Common myeloid progenitor, CD34-positive (primary cell): ENCODE measurements at regions of chr9 and their contacts with region 1.

Region 1: DNA sequence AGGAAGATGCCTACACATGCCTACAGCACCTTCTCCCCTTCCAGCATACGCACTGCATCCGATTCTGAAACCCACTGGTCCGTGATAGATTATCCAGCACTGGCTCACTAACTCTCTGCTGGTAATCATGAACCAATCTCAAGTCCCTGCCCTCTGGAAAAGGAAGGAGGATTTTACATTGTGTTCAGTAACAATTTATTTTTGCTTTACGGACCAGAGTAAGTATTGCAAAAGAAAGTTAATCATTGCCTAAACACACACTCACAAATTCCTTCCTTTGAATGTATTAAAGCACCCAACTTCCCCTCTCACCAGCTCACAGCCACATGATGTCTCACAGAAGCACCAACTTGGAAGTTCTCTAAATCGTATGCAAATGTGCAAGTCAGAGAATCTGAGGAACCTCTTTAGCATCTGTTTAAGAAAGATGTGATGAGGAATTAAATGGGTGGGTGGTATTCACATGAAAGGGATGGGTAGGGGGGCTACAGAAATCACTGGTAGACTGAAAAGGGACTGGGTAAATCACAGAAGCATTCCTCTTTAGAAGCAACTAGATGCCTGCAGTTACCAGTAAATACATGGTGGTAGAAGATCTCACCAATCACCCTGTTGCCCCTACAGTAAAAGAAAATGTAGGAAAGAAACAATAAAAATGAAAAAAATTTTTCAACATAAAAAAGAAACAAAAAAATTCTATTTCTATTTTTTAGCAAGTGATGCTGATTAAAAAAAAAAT is 8.4 kb downstream of the GNAQ start:
- DNase-seq: peak; percentile 76 to 98 (median 96)
- H3K4me3 ChIP-seq: peak overlapping the region in 6 of 7 experiments; percentile 50 to 82 (median 64)
- H3K27ac ChIP-seq: peak overlapping the region; percentile 41 to 67
- H3K4me1 ChIP-seq: peaks cover 17 to 80% (median 52%) of the 10 kb centered on the region in 4 experiments
- H3K27me3 ChIP-seq: no peaks in the 10 kb centered on the region

Region 2: GRCh38 chr9:77997611-77998284 is 25.4 kb before region 1 on chr9:
- CTCF ChIA-PET with region 1: interaction called, 11 read pairs
- POLR2A ChIA-PET with region 1: interaction called, 4 read pairs
- DNase-seq: peak; percentile 27 to 68 (median 48)
- H3K4me3 ChIP-seq: peak overlapping the region in 4 of 7 experiments; percentile 6 to 67 (median 55)
- H3K27ac ChIP-seq: peak overlapping the region; percentile 19 to 66
- H3K4me1 ChIP-seq: peaks cover 12 to 66% (median 36%) of the 10 kb centered on the region in 4 experiments
- H3K27me3 ChIP-seq: no peaks in the 10 kb centered on the region